ENCODE measurements at regions of chr6 and their contacts with region 1.

Region 1: GRCh38 chr6:134352786-134353480 is 35.0 kb upstream of the SGK1 start:
- DNase-seq: peak; percentile 51
- H3K4me3 Mint-ChIP-seq: no peak overlapping the region
- H3K27ac Mint-ChIP-seq: no peak overlapping the region
- H3K4me1 Mint-ChIP-seq: peaks cover 28% of the 10 kb centered on the region
- H3K27me3 Mint-ChIP-seq: no peaks in the 10 kb centered on the region

Region 2: GRCh38 chr6:134097114-134097707 is 255.7 kb before region 1 on chr6:
- CTCF ChIA-PET with region 1: no interaction called
- POLR2A ChIA-PET with region 1: no interaction called
- intact Hi-C with region 1: no loop called
- DNase-seq: peak; percentile 67
- H3K4me3 Mint-ChIP-seq: no peak overlapping the region
- H3K27ac Mint-ChIP-seq: no peak overlapping the region
- H3K4me1 Mint-ChIP-seq: no peaks in the 10 kb centered on the region
- H3K27me3 Mint-ChIP-seq: peaks cover 11% of the 10 kb centered on the region

Region 3: GRCh38 chr6:134145786-134146185 is 207.1 kb before region 1 on chr6:
- CTCF ChIA-PET with region 1: no interaction called
- POLR2A ChIA-PET with region 1: no interaction called
- intact Hi-C with region 1: no loop called
- DNase-seq: no peak
- H3K4me3 Mint-ChIP-seq: no peak overlapping the region
- H3K27ac Mint-ChIP-seq: no peak overlapping the region
- H3K4me1 Mint-ChIP-seq: no peaks in the 10 kb centered on the region
- H3K27me3 Mint-ChIP-seq: no peaks in the 10 kb centered on the region

Region 4: GRCh38 chr6:134288538-134289203 is 64.3 kb before region 1 on chr6:
- CTCF ChIA-PET with region 1: no interaction called
- POLR2A ChIA-PET with region 1: no interaction called
- intact Hi-C with region 1: loop called (anchors 1 kb)
- DNase-seq: peak; percentile 15
- H3K4me3 Mint-ChIP-seq: peak overlapping the region; percentile 21
- H3K27ac Mint-ChIP-seq: peak overlapping the region; percentile 85
- H3K4me1 Mint-ChIP-seq: peaks cover 22% of the 10 kb centered on the region
- H3K27me3 Mint-ChIP-seq: no peaks in the 10 kb centered on the region

Region 5: DNA sequence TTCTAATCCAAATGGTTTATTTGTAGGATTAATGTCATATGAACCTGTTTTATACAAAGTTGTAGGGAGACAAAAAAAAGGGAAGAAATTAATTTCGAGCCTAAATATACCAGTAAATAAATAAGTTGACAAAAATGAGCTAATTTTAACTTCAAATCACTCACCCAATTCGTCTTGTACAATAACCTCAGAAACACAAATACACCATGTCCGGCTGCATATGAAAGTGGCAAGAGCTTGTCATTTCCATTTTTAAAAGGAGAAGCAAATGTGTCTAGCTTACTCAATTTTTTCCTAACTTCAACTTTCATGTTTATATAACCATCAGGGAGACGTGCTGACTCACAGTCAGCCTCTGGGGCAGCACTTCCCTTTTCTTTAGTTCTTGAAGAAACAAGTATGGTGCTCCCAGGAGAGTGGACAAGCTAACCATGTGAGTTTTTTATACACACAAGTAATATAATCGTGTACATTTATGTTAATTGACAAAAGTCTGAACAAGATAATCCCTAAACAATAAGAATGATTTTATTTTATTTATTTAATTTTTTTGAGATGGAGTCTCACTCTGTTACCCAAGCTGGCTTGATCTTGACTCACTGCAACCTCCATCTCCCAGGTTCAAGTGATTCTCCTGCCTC is 20.5 kb after region 1 on chr6:
- CTCF ChIA-PET with region 1: interaction called, 4 read pairs
- POLR2A ChIA-PET with region 1: no interaction called
- intact Hi-C with region 1: loop called (anchors 1 kb)
- DNase-seq: peak; percentile 43
- H3K4me3 Mint-ChIP-seq: no peak overlapping the region
- H3K27ac Mint-ChIP-seq: no peak overlapping the region
- H3K4me1 Mint-ChIP-seq: peaks cover 30% of the 10 kb centered on the region
- H3K27me3 Mint-ChIP-seq: no peaks in the 10 kb centered on the region

Region 6: DNA sequence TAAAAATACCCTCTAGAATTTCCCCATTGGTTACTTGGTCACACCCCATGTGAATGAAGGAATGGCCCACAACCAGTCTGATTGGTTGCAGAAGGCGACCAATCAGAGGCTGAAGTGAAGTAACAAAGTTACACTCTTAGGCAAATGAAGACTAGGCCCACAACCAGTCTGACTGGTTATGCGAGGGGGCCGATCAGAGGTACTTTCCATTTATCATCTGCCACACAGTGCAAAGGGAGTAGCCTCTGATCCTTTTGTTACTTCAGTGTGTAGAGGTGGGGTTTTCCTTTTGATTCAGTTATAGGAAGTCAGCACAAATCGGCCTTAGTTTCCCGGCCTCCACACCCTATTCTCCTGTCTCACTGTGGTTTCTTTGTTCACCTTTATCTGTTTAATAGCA is 26.2 kb after region 1 on chr6:
- CTCF ChIA-PET with region 1: interaction called, 4 read pairs
- POLR2A ChIA-PET with region 1: interaction called, 3 read pairs
- intact Hi-C with region 1: loop called (anchors 1 kb)
- DNase-seq: peak; percentile 81
- H3K4me3 Mint-ChIP-seq: peak overlapping the region; percentile 27
- H3K27ac Mint-ChIP-seq: peak overlapping the region; percentile 83
- H3K4me1 Mint-ChIP-seq: peaks cover 32% of the 10 kb centered on the region
- H3K27me3 Mint-ChIP-seq: no peaks in the 10 kb centered on the region